Panc1 (cell line): ENCODE measurements at regions of chr11 and their contacts with region 1.

Region 1: GRCh38 chr11:124070915-124071635 is 29.9 kb upstream of the OR10G7 start:
- DNase-seq: peak; percentile 56
- ATAC-seq: peak; percentile 67; the same call in 1 of the 2 replicates
- H3K4me3 ChIP-seq: no peak overlapping the region
- H3K27ac ChIP-seq: no peak overlapping the region
- H3K4me1 ChIP-seq: no peaks in the 10 kb centered on the region
- H3K27me3 ChIP-seq: peaks cover 10% of the 10 kb centered on the region
- CTCF ChIP-seq: peak; percentile 85; the same call in 1 of the 2 replicates

Region 2: DNA sequence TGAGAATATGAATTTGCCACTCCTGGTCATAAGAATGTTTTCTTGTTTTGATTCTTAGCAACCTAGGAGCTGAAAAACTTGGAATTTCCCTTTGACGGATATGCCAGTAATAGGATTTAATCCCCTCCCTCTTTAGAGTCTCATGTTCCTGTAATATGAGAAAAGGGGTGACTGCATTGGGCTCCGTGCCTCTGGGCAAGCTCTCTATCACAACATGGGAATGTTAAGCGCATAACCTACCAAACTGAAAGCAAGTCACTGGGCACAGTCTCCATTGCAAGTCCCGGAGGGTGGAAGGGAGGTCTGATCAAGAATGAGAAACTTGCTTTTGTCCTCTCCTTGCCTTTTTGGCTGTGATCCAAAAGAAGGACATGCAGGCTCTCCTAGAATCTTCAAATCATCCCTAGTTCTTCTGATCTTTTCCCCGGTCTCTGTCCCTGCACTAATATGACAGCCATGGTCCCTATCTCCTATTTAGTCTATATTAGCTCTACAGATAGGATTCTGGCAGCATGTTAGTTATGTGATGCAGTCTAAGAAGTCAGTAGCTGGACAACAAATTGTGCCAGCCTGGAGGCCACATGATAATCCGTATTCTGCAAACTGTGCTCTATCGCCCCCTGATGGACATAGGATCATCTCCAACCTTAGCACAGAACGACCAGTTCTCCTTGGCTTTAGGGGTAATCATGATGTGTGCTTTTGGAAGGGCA is 123.8 kb after region 1 on chr11:
- CTCF ChIA-PET with region 1: interaction called, 4 read pairs
- POLR2A ChIA-PET with region 1: no interaction called
- in situ Hi-C with region 1: no loop called
- intact Hi-C with region 1: loop called (anchors 2 kb)
- DNase-seq: peak; percentile 33
- ATAC-seq: peak; percentile 85
- H3K4me3 ChIP-seq: no peak overlapping the region
- H3K27ac ChIP-seq: no peak overlapping the region
- H3K4me1 ChIP-seq: no peaks in the 10 kb centered on the region
- H3K27me3 ChIP-seq: no peaks in the 10 kb centered on the region
- CTCF ChIP-seq: peak; percentile 86

Region 3: DNA sequence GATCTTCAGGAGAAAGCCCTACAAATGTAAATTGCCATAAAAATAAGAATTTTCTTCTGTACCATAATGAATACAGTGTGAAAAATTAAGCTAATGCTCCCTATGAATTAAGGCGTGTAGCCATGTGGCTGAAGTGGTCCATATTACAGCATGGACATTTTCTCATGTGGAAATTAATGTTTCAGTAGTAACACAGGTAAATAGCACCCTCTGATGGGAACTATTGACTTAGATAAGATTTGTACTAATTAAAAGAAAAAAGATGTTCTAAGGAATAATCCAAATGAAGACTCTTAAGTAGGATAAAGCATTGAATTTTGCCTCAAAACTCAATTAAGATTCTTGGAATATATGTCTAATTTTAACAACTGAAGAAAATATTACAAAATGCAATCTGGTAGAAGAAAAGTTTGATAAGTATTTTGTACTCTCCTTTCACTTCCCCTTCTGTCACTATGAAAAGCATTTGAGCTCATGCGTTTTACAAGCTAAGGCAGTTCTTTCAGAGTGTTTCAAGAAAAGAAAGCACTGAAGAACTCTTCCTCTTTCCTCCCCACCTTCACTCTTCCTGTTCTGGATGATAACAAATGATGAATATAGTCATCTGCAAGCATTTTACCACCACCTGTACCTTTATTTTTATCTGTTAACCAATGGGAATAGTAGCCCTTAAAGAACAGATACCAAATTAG is 258.9 kb after region 1 on chr11:
- CTCF ChIA-PET with region 1: no interaction called
- POLR2A ChIA-PET with region 1: no interaction called
- in situ Hi-C with region 1: no loop called
- intact Hi-C with region 1: loop called (anchors 10 kb)
- DNase-seq: no peak
- ATAC-seq: no peak
- H3K4me3 ChIP-seq: no peak overlapping the region
- H3K27ac ChIP-seq: no peak overlapping the region
- H3K4me1 ChIP-seq: no peaks in the 10 kb centered on the region
- H3K27me3 ChIP-seq: 0 out of 2 replicates have a peak, but pooled peaks cover under 1% of the 10 kb centered on the region
- CTCF ChIP-seq: no peak

Region 4: GRCh38 chr11:124402326-124402922 is 331.3 kb after region 1 on chr11:
- CTCF ChIA-PET with region 1: no interaction called
- POLR2A ChIA-PET with region 1: no interaction called
- in situ Hi-C with region 1: no loop called
- intact Hi-C with region 1: loop called (anchors 1 kb)
- DNase-seq: peak; percentile 46
- ATAC-seq: peak; percentile 90
- H3K4me3 ChIP-seq: no peak overlapping the region
- H3K27ac ChIP-seq: no peak overlapping the region
- H3K4me1 ChIP-seq: no peaks in the 10 kb centered on the region
- H3K27me3 ChIP-seq: peaks cover 7% of the 10 kb centered on the region; the same call in 1 of the 2 replicates
- CTCF ChIP-seq: peak; percentile 87

Region 5: DNA sequence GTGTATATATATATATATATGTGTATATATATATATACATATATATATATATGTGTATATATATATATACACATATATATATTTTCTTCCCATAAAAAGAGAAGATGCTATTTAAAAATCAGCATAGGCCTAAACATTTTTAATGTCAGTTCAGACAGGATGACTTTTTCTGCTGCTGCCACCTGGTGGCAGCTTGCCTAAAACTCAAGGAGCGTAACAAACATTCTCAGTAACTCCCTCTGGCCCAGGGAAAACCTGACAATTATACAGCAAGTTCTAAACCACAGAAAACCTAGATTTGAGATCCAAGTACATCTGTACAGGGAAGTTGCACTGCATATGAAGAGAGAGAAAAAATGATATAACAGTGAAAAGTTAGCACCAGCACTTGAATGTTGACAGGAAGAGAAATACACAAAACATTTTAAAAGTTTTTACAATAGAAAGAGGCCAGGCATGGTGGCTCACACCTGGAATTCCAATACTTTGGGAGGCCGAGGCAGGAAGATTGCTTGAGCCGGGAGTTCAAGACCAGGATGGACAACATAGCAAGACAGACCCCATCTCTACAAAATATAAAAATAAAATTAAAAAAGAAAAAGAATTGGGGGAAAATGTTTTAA is 515.3 kb after region 1 on chr11:
- CTCF ChIA-PET with region 1: interaction called, 3 read pairs
- POLR2A ChIA-PET with region 1: no interaction called
- in situ Hi-C with region 1: no loop called
- intact Hi-C with region 1: loop called (anchors 5 kb)
- DNase-seq: peak; percentile 47
- ATAC-seq: peak; percentile 85; the same call in 1 of the 2 replicates
- H3K4me3 ChIP-seq: no peak overlapping the region
- H3K27ac ChIP-seq: no peak overlapping the region
- H3K4me1 ChIP-seq: no peaks in the 10 kb centered on the region
- H3K27me3 ChIP-seq: peaks cover 5% of the 10 kb centered on the region
- CTCF ChIP-seq: peak; percentile 71

Region 6: GRCh38 chr11:124673333-124674167 is 602.5 kb after region 1 on chr11 and contains the starts of genes SIAE and SPA17:
- CTCF ChIA-PET with region 1: no interaction called
- POLR2A ChIA-PET with region 1: interaction called, 15 read pairs
- in situ Hi-C with region 1: no loop called
- intact Hi-C with region 1: no loop called
- DNase-seq: peak; percentile 81
- ATAC-seq: peak; percentile 97
- H3K4me3 ChIP-seq: peak within 1 kb of the TSS; percentile 67 to 75
- H3K27ac ChIP-seq: peak within 1 kb of the TSS; percentile 93
- H3K4me1 ChIP-seq: peaks cover 13% of the 10 kb centered on the region
- H3K27me3 ChIP-seq: no peaks in the 10 kb centered on the region
- CTCF ChIP-seq: no peak
- total RNA-seq, gene SIAE: 14.9 TPM
- total RNA-seq, gene SPA17: 10.1 TPM